Colonic mucosa (tissue), 4 donors: ENCODE measurements at regions of chr22 and their contacts with region 1.

Region 1: GRCh38 chr22:46006379-46007002 is 29.5 kb upstream of the WNT7B start:
- DNase-seq: peak; percentile 92
- H3K4me3 ChIP-seq: no peak overlapping the region
- H3K27ac ChIP-seq: peak overlapping the region; percentile 55
- H3K4me1 ChIP-seq: peaks cover 12% of the 10 kb centered on the region
- H3K27me3 ChIP-seq: no peaks in the 10 kb centered on the region
- CTCF ChIP-seq: peak; percentile 98

Region 2: DNA sequence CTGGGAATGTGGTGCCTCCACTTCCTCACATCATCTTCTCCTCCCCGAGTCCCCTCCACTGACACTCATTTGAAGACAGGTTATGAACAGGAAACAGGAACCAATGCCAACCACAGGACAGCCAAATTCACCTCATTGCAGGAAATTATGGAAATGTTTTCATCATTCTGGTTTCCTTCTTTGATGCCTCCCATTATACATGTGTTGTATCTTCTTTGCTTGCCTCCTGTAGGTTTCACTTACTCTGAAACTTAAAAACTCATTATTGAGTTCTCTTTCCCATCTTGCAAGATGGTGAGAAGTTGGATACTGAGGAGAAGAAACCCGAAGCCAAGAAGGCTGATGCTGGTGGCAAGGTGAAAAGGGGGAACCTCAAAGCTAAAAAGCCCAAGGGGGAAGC is 1105.2 kb before region 1 on chr22:
- intact Hi-C with region 1: no loop called
- DNase-seq: no peak
- H3K4me3 ChIP-seq: no peak overlapping the region
- H3K27ac ChIP-seq: no peak overlapping the region
- H3K4me1 ChIP-seq: no peaks in the 10 kb centered on the region
- H3K27me3 ChIP-seq: no peaks in the 10 kb centered on the region
- CTCF ChIP-seq: no peak

Region 3: GRCh38 chr22:46116491-46116958 is 110.0 kb after region 1 on chr22:
- intact Hi-C with region 1: loop called (anchors 1 kb)
- DNase-seq: peak; percentile 95
- H3K4me3 ChIP-seq: no peak overlapping the region
- H3K27ac ChIP-seq: peak overlapping the region; percentile 18
- H3K4me1 ChIP-seq: no peaks in the 10 kb centered on the region
- H3K27me3 ChIP-seq: no peaks in the 10 kb centered on the region
- CTCF ChIP-seq: peak; percentile 64